ENCODE measurements at regions of chr18 and their contacts with region 1.

Region 1: DNA sequence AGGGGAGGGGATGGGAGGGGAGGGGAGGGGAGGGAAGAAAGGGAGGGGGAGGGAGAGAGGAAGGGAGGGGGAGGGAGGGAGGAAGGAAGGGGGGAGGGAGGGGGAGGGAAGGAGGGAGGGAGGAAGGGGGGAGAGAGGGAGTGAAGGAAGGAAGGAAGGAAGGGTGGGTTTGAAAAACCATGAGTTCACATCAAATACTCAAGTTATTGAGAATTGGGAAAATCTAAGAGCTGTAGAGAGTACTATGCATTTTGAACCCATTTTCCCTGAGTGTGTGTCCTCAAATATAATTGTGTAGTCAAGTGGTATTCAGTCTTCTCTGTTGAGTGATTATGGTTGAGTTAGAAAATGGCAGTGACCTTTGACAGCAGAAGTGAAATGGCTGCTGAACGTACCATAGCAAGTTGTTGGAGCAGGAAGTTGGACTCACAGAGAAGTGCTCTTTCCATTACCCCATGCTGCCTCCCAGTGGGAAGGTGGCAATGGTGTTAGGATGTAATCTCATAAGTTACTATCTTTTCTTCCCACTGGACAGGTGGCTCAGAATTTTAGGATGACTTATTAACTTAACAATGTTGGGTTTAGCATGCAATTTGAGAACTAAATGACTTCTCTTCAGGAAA is 214.6 kb downstream of the SETBP1 start:
- DNase-seq: peak; percentile 66
- ATAC-seq: peak; percentile 84
- H3K4me3 ChIP-seq: no peak overlapping the region
- H3K27ac ChIP-seq: no peak overlapping the region
- H3K4me1 ChIP-seq: 0 out of 2 replicates have a peak, but pooled peaks cover under 1% of the 10 kb centered on the region
- H3K27me3 ChIP-seq: no peaks in the 10 kb centered on the region
- CTCF ChIP-seq: peak; percentile 57

Region 2: DNA sequence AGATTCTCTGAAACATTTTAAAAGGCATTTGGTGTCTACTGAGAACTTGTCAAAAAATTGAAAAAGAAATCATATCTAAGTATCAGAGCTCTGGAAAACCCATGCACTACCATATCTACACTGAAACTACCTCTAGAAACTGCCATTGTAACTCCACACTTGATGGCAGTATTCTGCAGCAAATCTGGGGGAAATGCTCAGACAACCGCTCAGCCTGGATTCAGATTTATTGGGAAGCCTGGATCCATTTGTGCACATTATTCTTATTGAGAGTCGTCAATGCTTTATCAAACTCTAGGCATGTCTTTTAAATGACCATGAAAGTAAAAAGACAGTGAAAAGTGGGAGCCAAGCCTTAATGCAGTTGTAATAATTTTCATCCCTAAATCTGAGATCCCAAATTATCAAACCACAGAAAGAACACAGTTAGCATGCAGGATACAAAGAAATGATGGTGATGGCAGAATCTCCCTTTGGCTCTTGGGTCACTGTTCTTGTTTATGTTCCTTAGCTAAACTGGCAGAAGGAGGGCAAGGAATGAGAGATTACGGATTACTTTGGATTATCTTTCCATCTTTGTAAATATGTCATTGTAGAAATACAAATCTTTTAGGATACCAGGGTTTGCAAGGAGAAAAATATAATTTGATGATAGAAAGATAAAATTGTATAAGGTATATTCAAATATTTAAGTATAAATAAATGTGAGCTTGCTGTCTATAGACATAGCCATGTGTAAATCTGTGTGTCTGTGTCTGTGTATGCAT is 1105.9 kb before region 1 on chr18:
- CTCF ChIA-PET with region 1: no interaction called
- POLR2A ChIA-PET with region 1: no interaction called
- intact Hi-C with region 1: loop called (anchors 10 kb)
- DNase-seq: no peak
- ATAC-seq: peak; percentile 52; the same call in 1 of the 2 replicates
- H3K4me3 ChIP-seq: no peak overlapping the region
- H3K27ac ChIP-seq: no peak overlapping the region
- H3K4me1 ChIP-seq: peaks cover 6% of the 10 kb centered on the region; the same call in 1 of the 2 replicates
- H3K27me3 ChIP-seq: no peaks in the 10 kb centered on the region
- CTCF ChIP-seq: peak; percentile 33

Region 3: GRCh38 chr18:44130376-44130942 is 764.8 kb before region 1 on chr18:
- CTCF ChIA-PET with region 1: no interaction called
- POLR2A ChIA-PET with region 1: no interaction called
- intact Hi-C with region 1: loop called (anchors 2 kb)
- DNase-seq: peak; percentile 49
- ATAC-seq: peak; percentile 65
- H3K4me3 ChIP-seq: no peak overlapping the region
- H3K27ac ChIP-seq: no peak overlapping the region
- H3K4me1 ChIP-seq: 0 out of 2 replicates have a peak, but pooled peaks cover 5% of the 10 kb centered on the region
- H3K27me3 ChIP-seq: no peaks in the 10 kb centered on the region
- CTCF ChIP-seq: peak; percentile 69

Region 4: GRCh38 chr18:44601447-44601846 is 293.8 kb before region 1 on chr18:
- CTCF ChIA-PET with region 1: no interaction called
- POLR2A ChIA-PET with region 1: no interaction called
- intact Hi-C with region 1: loop called (anchors 10 kb)
- DNase-seq: peak; percentile 78
- ATAC-seq: peak; percentile 62
- H3K4me3 ChIP-seq: no peak overlapping the region
- H3K27ac ChIP-seq: peak overlapping the region; percentile 92
- H3K4me1 ChIP-seq: peaks cover 34% of the 10 kb centered on the region
- H3K27me3 ChIP-seq: no peaks in the 10 kb centered on the region
- CTCF ChIP-seq: no peak

Region 5: GRCh38 chr18:44823782-44824181 is 71.5 kb before region 1 on chr18:
- CTCF ChIA-PET with region 1: no interaction called
- POLR2A ChIA-PET with region 1: no interaction called
- intact Hi-C with region 1: loop called (anchors 1 kb)
- DNase-seq: peak; percentile 75
- ATAC-seq: peak; percentile 61
- H3K4me3 ChIP-seq: peak overlapping the region; percentile 43; the same call in 1 of the 2 replicates
- H3K27ac ChIP-seq: peak overlapping the region; percentile 92
- H3K4me1 ChIP-seq: peaks cover 40% of the 10 kb centered on the region
- H3K27me3 ChIP-seq: no peaks in the 10 kb centered on the region
- CTCF ChIP-seq: no peak

Measured in PC-3 (cell line).